Astrocyte of the cerebellum (primary cell): ENCODE measurements at regions of chr14 and their contacts with region 1.

Region 1: DNA sequence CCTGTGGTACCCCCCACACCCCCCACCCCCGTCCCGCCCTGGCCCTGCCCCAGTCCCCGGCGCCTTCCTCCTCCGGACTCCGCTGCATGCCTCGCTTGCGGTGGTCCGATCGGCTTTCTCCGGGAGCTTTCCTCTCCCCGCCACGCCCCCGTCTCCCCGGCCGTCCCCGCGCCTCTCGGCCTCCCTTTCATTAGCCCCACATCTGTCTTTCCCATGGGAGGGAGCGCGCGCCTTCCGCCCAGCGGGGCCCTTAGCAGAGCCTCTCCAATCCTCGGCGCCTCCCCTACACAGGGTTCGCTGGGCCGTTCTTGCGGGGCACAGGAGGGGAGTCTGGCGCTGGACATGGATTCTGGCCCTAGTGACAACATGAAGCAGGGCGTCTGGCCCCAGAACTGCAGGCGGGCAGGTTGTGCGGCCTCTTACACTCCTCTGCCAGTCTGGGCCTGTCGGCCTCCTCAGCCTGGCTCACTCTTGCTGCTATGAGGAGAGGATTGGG is 1.5 kb upstream of the EFS start:
- DNase-seq: no peak
- H3K4me3 ChIP-seq: peak overlapping the region; percentile 53
- CTCF ChIP-seq: no peak

Region 2: GRCh38 chr14:23327947-23328744 is 38.3 kb before region 1 on chr14:
- in situ Hi-C with region 1: loop called (anchors 5 kb)
- DNase-seq: peak; percentile 67
- H3K4me3 ChIP-seq: no peak overlapping the region
- CTCF ChIP-seq: peak; percentile 78